Endothelial cell of umbilical vein (primary cell): ENCODE measurements at regions of chr15 and their contacts with region 1.

Region 1: GRCh38 chr15:31128919-31129768 is 27.6 kb upstream of the TRPM1 start:
- DNase-seq: peak; percentile 78
- H3K4me3 ChIP-seq: no peak overlapping the region
- H3K27ac ChIP-seq: no peak overlapping the region
- H3K4me1 ChIP-seq: peaks cover 4% of the 10 kb centered on the region
- H3K27me3 ChIP-seq: peaks cover 0 to 3% of the 10 kb centered on the region in 2 experiments
- CTCF ChIP-seq: peak; percentile 93 to 96
- POLR2A ChIP-seq: no peak

Region 2: DNA sequence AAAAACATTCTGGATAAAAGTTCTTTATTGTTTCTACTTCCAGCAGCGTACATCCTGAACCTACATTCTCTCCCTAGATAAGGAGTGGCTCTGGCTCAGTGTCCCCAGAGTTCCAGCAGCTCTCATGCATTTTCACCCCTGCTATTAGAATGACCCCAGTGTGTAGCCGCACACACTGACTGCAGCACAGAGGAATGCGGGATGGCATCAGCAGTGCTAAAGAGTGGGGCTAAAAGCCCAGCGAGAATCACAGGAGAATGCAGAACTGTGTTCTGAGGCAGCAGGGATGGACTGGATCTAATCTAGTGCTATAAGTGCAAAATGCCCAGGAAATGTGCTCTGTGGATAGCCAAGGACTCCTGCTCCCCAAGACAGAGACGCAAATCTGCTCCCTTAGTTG is 1240.5 kb before region 1 on chr15:
- CTCF ChIA-PET with region 1: no interaction called
- POLR2A ChIA-PET with region 1: no interaction called
- dilution Hi-C with region 1: no loop called
- intact Hi-C with region 1: no loop called
- DNase-seq: no peak
- H3K4me3 ChIP-seq: no peak overlapping the region
- H3K27ac ChIP-seq: no peak overlapping the region
- H3K4me1 ChIP-seq: no peaks in the 10 kb centered on the region
- H3K27me3 ChIP-seq: peaks cover 4 to 18% of the 10 kb centered on the region in 2 experiments
- CTCF ChIP-seq: no peak
- POLR2A ChIP-seq: no peak

Region 3: GRCh38 chr15:30895461-30896210 is 233.5 kb before region 1 on chr15:
- CTCF ChIA-PET with region 1: interaction called, 27 read pairs
- POLR2A ChIA-PET with region 1: no interaction called
- dilution Hi-C with region 1: no loop called
- intact Hi-C with region 1: no loop called
- DNase-seq: no peak
- H3K4me3 ChIP-seq: no peak overlapping the region
- H3K27ac ChIP-seq: no peak overlapping the region
- H3K4me1 ChIP-seq: no peaks in the 10 kb centered on the region
- H3K27me3 ChIP-seq: no peaks in the 10 kb centered on the region
- CTCF ChIP-seq: no peak
- POLR2A ChIP-seq: no peak

Region 4: DNA sequence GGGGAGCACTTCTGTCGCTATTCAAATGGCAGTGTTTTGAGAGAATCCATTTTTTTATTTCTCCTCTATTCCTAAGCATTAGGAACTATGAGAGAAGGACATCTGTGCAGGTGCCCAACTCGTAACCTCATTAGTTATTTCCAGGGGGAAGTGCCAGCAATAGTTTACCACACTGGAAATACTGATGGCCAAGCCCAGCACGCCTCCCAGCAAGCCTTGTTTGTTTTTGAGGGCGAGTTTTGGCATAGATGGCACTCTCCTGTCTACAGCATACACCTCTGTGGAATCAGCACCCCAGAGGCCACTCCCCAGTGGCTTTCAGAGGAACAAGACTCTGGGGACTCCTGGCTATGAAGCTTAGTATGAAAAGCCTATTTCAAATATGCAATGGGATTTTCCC is 188.8 kb before region 1 on chr15:
- CTCF ChIA-PET with region 1: interaction called, 12 read pairs
- POLR2A ChIA-PET with region 1: no interaction called
- dilution Hi-C with region 1: no loop called
- intact Hi-C with region 1: no loop called
- DNase-seq: no peak
- H3K4me3 ChIP-seq: no peak overlapping the region
- H3K27ac ChIP-seq: no peak overlapping the region
- H3K4me1 ChIP-seq: no peaks in the 10 kb centered on the region
- H3K27me3 ChIP-seq: no peaks in the 10 kb centered on the region
- CTCF ChIP-seq: no peak
- POLR2A ChIP-seq: no peak

Region 5: DNA sequence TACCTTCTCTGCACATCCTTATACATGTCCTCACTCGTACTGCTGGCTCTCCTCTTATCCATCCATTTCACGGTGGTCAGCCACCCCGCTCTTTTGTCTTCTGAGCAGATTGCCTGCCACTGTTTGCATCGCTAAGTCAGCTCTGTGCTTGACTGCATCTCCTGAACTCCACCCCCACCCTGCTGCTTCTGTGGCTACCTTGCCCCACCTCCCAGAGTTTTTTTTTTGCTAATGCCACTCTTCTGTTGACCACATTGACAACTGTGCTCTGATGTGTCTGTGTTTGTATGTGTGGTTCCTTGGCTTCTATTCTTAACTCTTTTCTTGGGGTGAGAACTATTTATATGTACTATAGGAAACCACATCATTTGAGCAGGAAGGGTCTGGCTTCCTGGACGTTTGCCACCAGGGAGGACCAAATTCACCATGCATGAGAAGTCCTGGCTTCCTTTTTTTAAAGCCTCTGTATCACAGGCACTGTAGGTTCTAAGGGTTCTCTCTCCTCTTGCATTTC is 124.9 kb before region 1 on chr15:
- CTCF ChIA-PET with region 1: interaction called, 12 read pairs
- POLR2A ChIA-PET with region 1: no interaction called
- dilution Hi-C with region 1: no loop called
- intact Hi-C with region 1: no loop called
- DNase-seq: peak; percentile 88
- H3K4me3 ChIP-seq: peak overlapping the region in 1 of 3 experiments; percentile 15
- H3K27ac ChIP-seq: peak overlapping the region; percentile 64
- H3K4me1 ChIP-seq: peaks cover 15% of the 10 kb centered on the region
- H3K27me3 ChIP-seq: no peaks in the 10 kb centered on the region
- CTCF ChIP-seq: no peak
- POLR2A ChIP-seq: no peak

Region 6: GRCh38 chr15:31101262-31102038 is 27.7 kb before region 1 on chr15 and contains the start of gene TRPM1:
- CTCF ChIA-PET with region 1: interaction called, 14 read pairs
- POLR2A ChIA-PET with region 1: no interaction called
- dilution Hi-C with region 1: no loop called
- intact Hi-C with region 1: no loop called
- DNase-seq: no peak
- H3K4me3 ChIP-seq: no peak within 1 kb of the TSS
- H3K27ac ChIP-seq: no peak within 1 kb of the TSS
- H3K4me1 ChIP-seq: peaks cover 5% of the 10 kb centered on the region
- H3K27me3 ChIP-seq: peaks cover 3% of the 10 kb centered on the region in 2 experiments
- CTCF ChIP-seq: no peak
- POLR2A ChIP-seq: no peak
- total RNA-seq, gene TRPM1: 0.53 TPM in 1 of 2 replicates, not detected in the other

Region 7: DNA sequence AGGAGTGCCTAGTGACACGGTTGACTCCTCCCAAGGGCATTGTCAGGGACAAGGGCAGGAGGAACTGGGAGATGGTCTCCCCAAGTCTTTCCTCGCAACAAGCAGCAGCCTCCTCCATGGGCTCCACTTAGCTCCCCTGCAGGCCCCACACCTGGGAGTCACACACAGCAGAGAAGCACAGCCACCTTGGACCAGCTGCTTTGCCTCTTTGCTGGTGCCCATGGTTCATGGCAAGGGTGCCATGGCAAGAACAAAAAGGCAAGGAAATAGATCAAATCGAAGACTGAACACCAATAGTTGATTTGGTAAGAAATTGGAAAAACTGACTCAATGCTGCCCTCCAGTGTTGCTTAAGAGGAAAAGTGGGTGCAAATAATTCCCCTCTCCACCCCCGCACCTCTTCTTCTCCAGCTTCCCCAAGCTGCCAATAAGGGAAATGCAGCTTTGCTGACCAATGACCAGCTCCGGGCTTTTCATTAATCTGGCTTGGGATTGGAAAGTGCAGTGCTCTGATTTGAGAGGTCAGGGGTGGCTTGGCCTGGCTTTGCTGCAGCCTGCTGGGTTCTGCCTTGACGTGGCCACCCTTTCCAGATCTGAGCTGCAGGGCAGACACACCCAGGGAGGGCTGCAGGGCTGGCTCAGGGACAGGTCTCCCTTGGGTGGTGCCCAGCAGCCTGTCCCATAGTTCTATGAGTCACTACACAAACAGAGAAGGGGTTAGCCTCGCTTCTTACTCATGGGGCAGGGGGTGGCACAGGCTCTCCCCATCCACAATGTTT is 359.5 kb after region 1 on chr15:
- CTCF ChIA-PET with region 1: interaction called, 20 read pairs
- POLR2A ChIA-PET with region 1: no interaction called
- dilution Hi-C with region 1: no loop called
- intact Hi-C with region 1: no loop called
- DNase-seq: peak; percentile 81
- H3K4me3 ChIP-seq: no peak overlapping the region
- H3K27ac ChIP-seq: no peak overlapping the region
- H3K4me1 ChIP-seq: peaks cover 5% of the 10 kb centered on the region
- H3K27me3 ChIP-seq: peaks cover 13 to 18% of the 10 kb centered on the region in 2 experiments
- CTCF ChIP-seq: peak; percentile 84 to 90
- POLR2A ChIP-seq: no peak